ENCODE measurements at regions of chr5 and their contacts with region 1.

Region 1: GRCh38 chr5:74672215-74672877 is 12.7 kb upstream of the HEXB start:
- DNase-seq: no peak
- H3K4me3 ChIP-seq: no peak overlapping the region
- H3K27ac ChIP-seq: no peak overlapping the region
- H3K4me1 ChIP-seq: peaks cover 6% of the 10 kb centered on the region
- H3K27me3 ChIP-seq: no peaks in the 10 kb centered on the region
- CTCF ChIP-seq: no peak
- POLR2A ChIP-seq: no peak

Region 2: DNA sequence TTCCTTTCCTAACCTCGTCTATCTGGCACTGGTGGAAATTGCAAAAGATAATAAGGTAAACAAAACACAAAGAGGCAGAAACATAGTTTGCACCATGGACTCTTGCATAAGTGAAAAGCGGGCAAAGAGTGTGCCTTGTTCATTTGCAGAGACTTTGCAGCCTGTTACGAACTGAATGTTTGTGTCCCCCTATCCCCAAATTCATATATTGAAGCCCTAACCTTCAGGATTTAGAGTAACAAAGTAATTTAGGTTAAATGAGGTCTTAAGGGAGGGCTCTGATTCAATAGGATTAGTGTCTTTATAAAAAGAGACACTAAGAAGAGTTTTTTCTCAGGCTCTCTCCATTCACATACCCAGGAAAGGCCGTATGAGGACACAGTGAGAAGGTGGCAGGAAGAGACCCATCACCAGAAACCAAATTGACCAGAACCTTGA is 245.9 kb after region 1 on chr5:
- intact Hi-C with region 1: loop called (anchors 1 kb)
- DNase-seq: no peak
- H3K4me3 ChIP-seq: no peak overlapping the region
- H3K27ac ChIP-seq: no peak overlapping the region
- H3K4me1 ChIP-seq: no peaks in the 10 kb centered on the region
- H3K27me3 ChIP-seq: no peaks in the 10 kb centered on the region
- CTCF ChIP-seq: no peak
- POLR2A ChIP-seq: no peak